ENCODE measurements at regions of chr4 and their contacts with region 1.

Region 1: GRCh38 chr4:68249434-68249833 is 3.9 kb upstream of the TMPRSS11B start:
- DNase-seq: no peak
- ATAC-seq: peak; percentile 94
- H3K4me3 Mint-ChIP-seq: peak overlapping the region; percentile 5
- H3K27ac Mint-ChIP-seq: peak overlapping the region; percentile 96
- H3K4me1 Mint-ChIP-seq: peaks cover 15% of the 10 kb centered on the region
- H3K27me3 Mint-ChIP-seq: peaks cover 16% of the 10 kb centered on the region

Region 2: GRCh38 chr4:67333664-67334063 is 915.8 kb before region 1 on chr4:
- CTCF ChIA-PET with region 1: no interaction called
- POLR2A ChIA-PET with region 1: no interaction called
- intact Hi-C with region 1: no loop called
- DNase-seq: no peak
- ATAC-seq: no peak
- H3K4me3 Mint-ChIP-seq: no peak overlapping the region
- H3K27ac Mint-ChIP-seq: no peak overlapping the region
- H3K4me1 Mint-ChIP-seq: no peaks in the 10 kb centered on the region
- H3K27me3 Mint-ChIP-seq: peaks cover 12% of the 10 kb centered on the region

Region 3: GRCh38 chr4:68021185-68021584 is 228.2 kb before region 1 on chr4:
- CTCF ChIA-PET with region 1: no interaction called
- POLR2A ChIA-PET with region 1: no interaction called
- intact Hi-C with region 1: no loop called
- DNase-seq: no peak
- ATAC-seq: peak; percentile 63
- H3K4me3 Mint-ChIP-seq: no peak overlapping the region
- H3K27ac Mint-ChIP-seq: no peak overlapping the region
- H3K4me1 Mint-ChIP-seq: no peaks in the 10 kb centered on the region
- H3K27me3 Mint-ChIP-seq: no peaks in the 10 kb centered on the region

Region 4: DNA sequence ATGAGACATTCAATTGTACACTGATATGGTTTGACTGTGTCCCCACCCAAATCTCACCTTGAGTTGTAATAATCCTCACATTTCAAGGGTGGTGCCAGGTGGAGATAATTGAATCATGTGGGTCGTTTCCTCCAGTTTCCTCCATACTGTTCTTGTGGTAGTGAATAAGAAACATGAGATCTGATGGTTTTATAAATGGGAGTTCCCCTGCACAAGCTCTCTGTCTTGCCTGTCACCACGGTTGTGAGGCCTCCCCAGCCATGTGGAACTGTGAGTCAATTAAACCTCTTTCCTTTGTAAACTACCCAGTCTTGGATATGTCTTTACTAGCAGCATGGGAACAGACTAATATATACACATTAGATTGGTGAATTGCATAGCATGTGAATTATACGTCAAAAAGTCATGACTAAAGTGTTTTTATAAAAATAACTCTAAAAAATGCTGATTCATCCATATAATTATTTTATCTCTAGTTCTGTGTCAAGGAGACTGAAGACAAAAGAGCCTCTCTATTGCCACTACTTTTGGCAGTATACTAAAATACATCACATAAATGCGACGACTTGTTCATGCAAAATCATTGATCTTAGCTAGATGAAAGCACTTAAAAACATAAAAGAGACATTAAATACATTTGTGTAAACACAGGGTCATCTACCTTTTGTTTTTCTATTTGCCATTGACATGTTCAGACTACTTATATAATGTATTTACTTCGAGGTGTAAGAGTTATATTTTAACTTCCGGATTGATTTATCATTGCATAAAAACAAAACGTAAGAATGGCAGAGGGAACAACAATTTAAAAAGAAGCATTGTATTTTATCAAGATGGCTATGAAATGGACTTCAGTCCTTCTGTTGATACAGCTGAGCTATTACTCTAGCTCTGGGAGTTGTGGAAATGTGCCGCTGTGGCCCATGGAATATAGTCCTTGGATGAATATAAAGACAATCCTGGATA is 50.3 kb after region 1 on chr4:
- CTCF ChIA-PET with region 1: no interaction called
- POLR2A ChIA-PET with region 1: no interaction called
- intact Hi-C with region 1: loop called in 1 of 2 experiments (anchors 1 kb)
- DNase-seq: peak; percentile 51
- ATAC-seq: peak; percentile 97
- H3K4me3 Mint-ChIP-seq: no peak overlapping the region
- H3K27ac Mint-ChIP-seq: no peak overlapping the region
- H3K4me1 Mint-ChIP-seq: peaks cover 6% of the 10 kb centered on the region
- H3K27me3 Mint-ChIP-seq: peaks cover 11% of the 10 kb centered on the region

Region 5: GRCh38 chr4:68349649-68350360 is 100.4 kb after region 1 on chr4 and contains the start of gene YTHDC1:
- CTCF ChIA-PET with region 1: no interaction called
- POLR2A ChIA-PET with region 1: no interaction called
- intact Hi-C with region 1: loop called (anchors 1 to 2 kb)
- DNase-seq: peak; percentile 98
- ATAC-seq: peak; percentile 96
- H3K4me3 Mint-ChIP-seq: peak within 1 kb of the TSS; percentile 87
- H3K27ac Mint-ChIP-seq: peak within 1 kb of the TSS; percentile 98
- H3K4me1 Mint-ChIP-seq: peaks cover 26% of the 10 kb centered on the region
- H3K27me3 Mint-ChIP-seq: no peaks in the 10 kb centered on the region
- total RNA-seq, gene YTHDC1: 78.5 to 83.0 TPM

Region 6: DNA sequence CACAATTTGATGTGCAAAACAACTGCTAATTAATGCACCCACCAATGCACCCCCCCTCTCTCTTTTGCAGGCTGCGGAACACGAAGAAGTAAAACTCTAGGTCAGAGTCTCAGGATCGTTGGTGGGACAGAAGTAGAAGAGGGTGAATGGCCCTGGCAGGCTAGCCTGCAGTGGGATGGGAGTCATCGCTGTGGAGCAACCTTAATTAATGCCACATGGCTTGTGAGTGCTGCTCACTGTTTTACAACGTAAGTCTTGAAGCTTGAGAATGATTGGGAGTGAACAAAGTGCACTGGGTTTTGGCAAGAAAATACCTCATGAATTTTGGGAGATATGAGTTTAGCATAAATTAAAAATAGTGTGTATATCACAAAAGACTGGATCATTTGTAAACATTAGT is 226.8 kb after region 1 on chr4:
- CTCF ChIA-PET with region 1: no interaction called
- POLR2A ChIA-PET with region 1: no interaction called
- intact Hi-C with region 1: no loop called
- DNase-seq: no peak
- ATAC-seq: no peak
- H3K4me3 Mint-ChIP-seq: no peak overlapping the region
- H3K27ac Mint-ChIP-seq: no peak overlapping the region
- H3K4me1 Mint-ChIP-seq: no peaks in the 10 kb centered on the region
- H3K27me3 Mint-ChIP-seq: no peaks in the 10 kb centered on the region